ENCODE measurements at regions of chr7 and their contacts with region 1.

Region 1: DNA sequence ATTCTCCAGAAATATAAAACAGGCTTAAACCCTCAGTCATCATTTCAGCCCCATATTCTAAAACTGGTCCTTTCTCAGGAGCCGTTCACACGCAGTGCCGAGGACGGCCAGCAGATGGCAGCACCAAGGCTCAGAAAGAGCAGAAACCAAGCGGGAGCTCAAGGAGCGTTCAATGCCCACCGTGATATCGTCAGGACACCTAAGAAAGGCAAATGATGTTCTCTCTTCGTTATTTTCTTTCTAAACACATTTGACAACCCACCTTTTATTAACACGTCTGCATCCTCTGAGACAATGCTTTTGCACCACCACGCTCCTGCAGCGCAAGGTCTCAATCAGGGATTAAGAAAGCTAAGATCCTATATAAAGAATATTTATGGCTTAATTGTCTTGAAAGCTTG is 45.7 kb upstream of the RBM33 start:
- DNase-seq: peak; percentile 85
- H3K4me3 ChIP-seq: no peak overlapping the region
- H3K27ac ChIP-seq: no peak overlapping the region
- H3K4me1 ChIP-seq: peaks cover 0 to 4% (median 1%) of the 10 kb centered on the region in 4 donors
- H3K27me3 ChIP-seq: peaks cover 30% of the 10 kb centered on the region
- CTCF ChIP-seq: peak; percentile 92 to 99 (median 96)
- EP300 ChIP-seq: no peak
- POLR2A ChIP-seq: no peak

Region 2: DNA sequence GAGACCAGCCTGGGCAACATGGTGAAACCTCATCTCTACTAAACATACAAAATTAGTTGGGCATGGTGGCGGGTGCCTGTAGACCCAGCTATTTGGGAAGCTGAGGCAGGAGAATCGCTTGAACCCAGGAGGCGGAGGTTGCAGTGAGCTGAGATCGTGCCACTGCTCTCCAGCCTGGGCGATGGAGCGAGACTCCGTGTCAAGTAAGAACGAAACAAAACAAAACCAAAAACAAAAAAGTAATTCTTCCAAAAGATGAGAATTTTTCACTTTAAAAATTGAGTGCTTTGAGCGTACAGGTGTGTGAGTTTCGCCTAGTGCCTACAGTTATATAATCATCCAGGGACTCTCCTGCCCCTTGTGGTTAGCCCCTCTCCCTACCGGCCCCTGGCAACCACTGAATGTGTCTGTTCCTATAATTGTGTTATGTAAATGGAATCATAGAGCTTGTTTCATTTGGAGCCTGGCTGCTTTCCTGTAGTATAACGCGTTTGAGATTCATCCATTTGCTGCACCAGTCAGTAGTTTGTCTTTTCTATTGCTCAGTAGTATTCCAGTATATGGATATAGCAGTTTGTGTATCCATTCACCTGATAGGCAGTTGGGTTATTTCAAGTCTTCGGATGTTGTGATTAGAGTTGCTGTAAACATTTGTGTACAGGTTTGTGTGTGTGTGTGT is 125.7 kb after region 1 on chr7:
- in situ Hi-C with region 1: loop called in 1 of 4 experiments (anchors 10 kb)
- intact Hi-C with region 1: no loop called
- DNase-seq: no peak
- H3K4me3 ChIP-seq: no peak overlapping the region
- H3K27ac ChIP-seq: no peak overlapping the region
- H3K4me1 ChIP-seq: peaks cover 0 to 6% (median 6%) of the 10 kb centered on the region in 4 donors
- H3K27me3 ChIP-seq: no peaks in the 10 kb centered on the region
- CTCF ChIP-seq: no peak
- EP300 ChIP-seq: no peak
- POLR2A ChIP-seq: no peak

Region 3: DNA sequence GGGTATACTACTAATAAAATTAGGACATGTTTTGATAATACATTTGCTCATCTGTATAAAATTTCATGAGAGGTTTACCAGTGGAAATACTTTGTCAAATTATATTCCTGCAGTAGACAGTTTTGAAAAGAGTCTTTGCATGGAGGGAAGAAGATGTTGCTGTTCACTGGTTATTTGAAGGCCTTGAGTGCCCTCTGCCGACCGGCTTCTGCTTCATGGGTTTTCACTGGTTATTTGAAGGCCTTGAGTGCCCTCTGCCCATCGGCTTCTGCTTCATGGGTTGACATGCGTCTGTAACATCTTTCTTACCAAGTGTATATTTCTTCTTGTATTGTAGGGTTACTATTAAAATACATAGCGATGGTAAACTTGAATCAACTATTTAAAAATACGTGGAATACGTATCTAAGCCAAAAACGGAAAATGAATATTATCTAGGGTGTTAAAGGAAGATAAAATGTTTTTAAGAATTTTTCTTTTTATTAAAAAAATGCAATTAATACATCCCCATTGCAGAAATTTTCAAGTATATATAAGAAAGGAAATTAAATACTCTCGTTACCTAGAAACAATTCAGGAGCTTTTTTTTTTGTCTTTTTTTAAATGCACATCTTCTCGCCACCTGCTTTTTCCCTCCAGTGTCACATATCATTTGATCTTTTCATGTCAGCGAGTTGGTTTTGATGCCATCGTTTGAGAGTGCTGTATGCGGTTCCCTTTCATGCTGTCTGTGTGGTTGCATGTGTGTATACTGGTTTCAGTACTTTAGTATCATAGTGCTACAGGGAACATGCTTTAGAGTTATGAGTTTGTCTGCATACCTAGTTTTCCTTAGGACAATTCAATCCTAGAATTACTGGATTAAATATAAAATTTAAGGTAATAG is 140.1 kb after region 1 on chr7:
- in situ Hi-C with region 1: loop called in 1 of 4 experiments (anchors 10 kb)
- intact Hi-C with region 1: no loop called
- DNase-seq: peak; percentile 83
- H3K4me3 ChIP-seq: no peak overlapping the region
- H3K27ac ChIP-seq: no peak overlapping the region
- H3K4me1 ChIP-seq: peaks cover 0 to 11% (median 2%) of the 10 kb centered on the region in 4 donors
- H3K27me3 ChIP-seq: no peaks in the 10 kb centered on the region
- CTCF ChIP-seq: peak; percentile 37 to 71 (median 62)
- EP300 ChIP-seq: no peak
- POLR2A ChIP-seq: no peak

Region 4: GRCh38 chr7:155752756-155753445 is 154.1 kb after region 1 on chr7:
- in situ Hi-C with region 1: loop called in 1 of 4 experiments (anchors 10 kb)
- intact Hi-C with region 1: no loop called
- DNase-seq: peak; percentile 29
- H3K4me3 ChIP-seq: no peak overlapping the region
- H3K27ac ChIP-seq: peak overlapping the region in 2 of 4 donors; percentile 22 to 55
- H3K4me1 ChIP-seq: peaks cover 0 to 44% (median 12%) of the 10 kb centered on the region in 4 donors
- H3K27me3 ChIP-seq: no peaks in the 10 kb centered on the region
- CTCF ChIP-seq: no peak
- EP300 ChIP-seq: no peak
- POLR2A ChIP-seq: no peak

Region 5: GRCh38 chr7:155763691-155764437 is 165.1 kb after region 1 on chr7:
- in situ Hi-C with region 1: loop called (anchors 5 to 10 kb)
- intact Hi-C with region 1: loop called (anchors 10 kb)
- DNase-seq: no peak
- H3K4me3 ChIP-seq: no peak overlapping the region
- H3K27ac ChIP-seq: peak overlapping the region; percentile 2 to 40 (median 25)
- H3K4me1 ChIP-seq: peaks cover 0 to 43% (median 6%) of the 10 kb centered on the region in 4 donors
- H3K27me3 ChIP-seq: no peaks in the 10 kb centered on the region
- CTCF ChIP-seq: no peak
- EP300 ChIP-seq: no peak
- POLR2A ChIP-seq: no peak

Region 6: GRCh38 chr7:155769701-155770100 is 170.9 kb after region 1 on chr7:
- in situ Hi-C with region 1: loop called in 3 of 4 experiments (anchors 5 to 10 kb)
- intact Hi-C with region 1: loop called (anchors 10 kb)
- DNase-seq: no peak
- H3K4me3 ChIP-seq: no peak overlapping the region
- H3K27ac ChIP-seq: peak overlapping the region in 2 of 4 donors; percentile 5 to 20
- H3K4me1 ChIP-seq: peaks cover 0 to 1% (median 0%) of the 10 kb centered on the region in 4 donors
- H3K27me3 ChIP-seq: no peaks in the 10 kb centered on the region
- CTCF ChIP-seq: no peak
- EP300 ChIP-seq: no peak
- POLR2A ChIP-seq: no peak

Measured in transverse colon (tissue), 4 donors.